Right lobe of liver (tissue), 6 donors: ENCODE measurements at regions of chr19 and their contacts with region 1.

Region 1: GRCh38 chr19:46288896-46289588 is 7.8 kb upstream of the HIF3A start:
- DNase-seq: no peak
- ATAC-seq: peak in 3 of 4 donors; percentile 50 to 83 (median 75)
- H3K4me3 ChIP-seq: no peak overlapping the region
- H3K27ac ChIP-seq: no peak overlapping the region
- H3K4me1 ChIP-seq: no peaks in the 10 kb centered on the region
- H3K27me3 ChIP-seq: no peaks in the 10 kb centered on the region
- CTCF ChIP-seq: no peak
- POLR2A ChIP-seq: no peak

Region 2: DNA sequence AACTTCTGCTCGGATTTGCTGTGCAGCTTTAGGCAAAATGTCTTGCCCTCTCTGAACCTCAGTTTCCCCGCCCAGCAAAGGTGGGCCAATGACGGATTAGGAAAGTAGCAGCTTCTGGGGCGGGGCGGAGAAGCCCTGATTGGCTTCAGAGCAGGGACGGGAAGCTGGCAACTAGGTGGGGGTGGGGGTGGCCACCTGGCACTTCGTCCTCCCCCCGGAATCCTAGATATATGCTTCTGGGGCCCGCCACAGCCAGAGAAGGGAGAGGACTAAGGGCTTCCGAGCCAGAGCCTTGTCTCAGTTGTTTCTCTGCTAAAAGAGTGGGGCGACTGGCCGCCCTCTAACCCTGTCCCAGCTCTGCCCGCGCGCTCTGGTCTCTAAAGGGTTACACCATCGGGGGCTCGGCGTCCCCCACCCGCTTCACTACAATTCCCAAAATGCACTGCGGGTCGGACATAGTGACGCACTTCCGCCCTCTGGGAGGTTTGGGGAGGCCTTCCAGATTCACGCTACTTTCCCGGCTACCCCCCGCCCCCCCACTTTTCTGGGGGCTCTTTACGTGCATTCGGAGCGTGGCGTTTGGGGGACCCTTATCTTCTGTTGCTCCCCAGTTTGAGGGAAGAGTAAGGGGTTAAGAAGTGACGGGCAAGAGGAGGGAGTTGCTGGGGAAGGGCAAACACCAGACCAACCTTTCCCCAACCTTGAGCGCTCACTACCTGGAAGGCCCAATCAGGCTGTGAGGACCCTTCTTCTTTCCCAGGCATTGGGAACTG is 402.4 kb before region 1 on chr19:
- intact Hi-C with region 1: no loop called
- DNase-seq: peak; percentile 88 to 94 (median 92)
- ATAC-seq: peak; percentile 58 to 64 (median 62)
- H3K4me3 ChIP-seq: peak overlapping the region; percentile 69 to 83 (median 80)
- H3K27ac ChIP-seq: peak overlapping the region; percentile 78 to 86 (median 84)
- H3K4me1 ChIP-seq: peaks cover 0 to 28% (median 11%) of the 10 kb centered on the region in 4 donors
- H3K27me3 ChIP-seq: no peaks in the 10 kb centered on the region
- CTCF ChIP-seq: no peak
- POLR2A ChIP-seq: peak; percentile 82

Region 3: DNA sequence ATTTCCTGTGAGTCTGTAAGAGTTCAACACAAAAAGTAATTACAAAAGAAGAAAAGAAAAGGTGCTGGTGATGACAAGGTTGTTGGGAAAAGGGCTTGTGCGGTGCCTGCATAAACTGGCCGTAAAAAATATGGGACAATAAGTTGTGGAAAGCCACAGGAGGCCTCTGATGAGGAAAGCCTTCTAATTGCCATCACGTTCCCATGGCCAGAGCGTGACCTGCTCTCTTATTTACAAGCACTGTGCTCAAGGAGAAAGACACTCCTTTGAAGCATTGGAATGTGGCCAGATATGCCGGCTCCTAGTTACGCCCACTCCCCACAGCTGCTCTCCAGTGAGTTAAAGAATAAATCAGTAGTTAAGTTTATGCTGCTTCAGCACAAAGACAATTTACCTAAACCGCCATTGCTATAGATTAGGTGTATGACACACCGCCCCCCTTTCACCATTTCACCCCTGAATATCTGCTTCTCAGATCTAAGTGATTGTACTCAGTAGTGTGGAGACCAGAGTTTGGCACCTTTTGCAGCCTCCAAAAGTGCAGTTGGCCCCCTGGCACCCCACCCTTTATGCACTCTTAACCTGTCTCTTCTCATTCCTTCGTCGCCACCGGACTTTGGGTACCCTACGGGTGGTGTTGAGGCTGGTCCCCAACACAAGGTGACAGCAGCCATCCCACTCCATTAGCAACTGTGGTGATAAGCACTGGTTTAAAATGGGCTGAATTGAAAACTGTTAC is 258.1 kb before region 1 on chr19:
- intact Hi-C with region 1: no loop called
- DNase-seq: no peak
- ATAC-seq: no peak
- H3K4me3 ChIP-seq: no peak overlapping the region
- H3K27ac ChIP-seq: no peak overlapping the region
- H3K4me1 ChIP-seq: no peaks in the 10 kb centered on the region
- H3K27me3 ChIP-seq: no peaks in the 10 kb centered on the region
- CTCF ChIP-seq: no peak
- POLR2A ChIP-seq: no peak

Region 4: DNA sequence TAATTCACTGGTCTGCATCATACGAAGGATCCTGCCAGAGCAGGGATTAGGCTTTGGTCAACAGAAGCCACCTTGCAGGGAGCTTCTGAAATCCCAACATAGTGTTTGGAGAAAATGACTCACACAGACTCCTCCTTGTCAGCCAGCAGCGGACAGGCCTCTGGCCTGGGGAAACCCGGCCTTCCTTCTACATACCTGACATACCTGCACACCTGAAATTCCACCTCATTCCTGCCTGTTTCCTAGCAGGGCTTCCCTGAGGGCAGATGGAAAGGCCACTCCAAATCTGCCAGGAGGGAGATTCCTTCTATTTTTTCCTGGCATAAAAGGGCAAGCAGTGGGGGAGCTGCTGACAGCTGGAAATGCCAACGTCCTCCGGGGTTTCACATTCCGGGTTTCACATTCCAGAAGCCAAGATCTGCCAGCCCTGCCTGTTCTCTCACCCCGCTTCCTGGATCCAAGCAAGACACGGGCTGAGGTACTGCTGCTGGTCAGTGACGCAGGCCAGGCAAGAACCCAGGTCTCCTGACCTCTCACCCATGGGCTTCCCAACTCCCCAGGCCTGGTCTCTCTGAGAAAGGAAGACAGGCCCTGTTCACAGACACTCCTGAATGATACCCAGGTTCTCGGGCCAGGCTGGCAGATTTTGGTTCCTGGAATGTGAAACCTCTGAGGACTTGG is 77.7 kb before region 1 on chr19:
- intact Hi-C with region 1: no loop called
- DNase-seq: no peak
- ATAC-seq: peak in 1 of 4 donors; percentile 18
- H3K4me3 ChIP-seq: no peak overlapping the region
- H3K27ac ChIP-seq: peak overlapping the region in 1 of 3 donors; percentile 3
- H3K4me1 ChIP-seq: no peaks in the 10 kb centered on the region
- H3K27me3 ChIP-seq: no peaks in the 10 kb centered on the region
- CTCF ChIP-seq: no peak
- POLR2A ChIP-seq: no peak

Region 5: DNA sequence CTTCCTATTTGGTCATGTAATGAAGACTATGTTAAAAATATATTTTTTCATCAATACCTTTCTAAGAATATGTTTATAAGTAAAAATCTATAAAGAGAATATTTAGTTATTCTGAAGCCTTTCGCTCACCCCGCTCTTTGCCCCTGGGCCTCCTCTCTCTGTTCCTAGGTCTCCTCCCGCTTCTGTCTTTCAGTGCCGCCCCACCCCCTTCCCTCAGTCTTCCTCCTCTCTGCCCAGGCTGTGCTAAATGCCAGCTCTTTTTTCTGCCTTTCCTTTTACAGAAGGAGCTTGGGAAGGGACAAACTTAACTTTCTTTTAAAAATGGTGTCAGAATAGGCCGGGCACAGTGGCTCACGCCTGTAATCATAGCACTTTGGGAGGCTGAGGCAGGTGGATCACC is 30.6 kb after region 1 on chr19:
- intact Hi-C with region 1: no loop called
- DNase-seq: no peak
- ATAC-seq: no peak
- H3K4me3 ChIP-seq: no peak overlapping the region
- H3K27ac ChIP-seq: no peak overlapping the region
- H3K4me1 ChIP-seq: peaks cover 0 to 7% (median 0%) of the 10 kb centered on the region in 4 donors
- H3K27me3 ChIP-seq: no peaks in the 10 kb centered on the region
- CTCF ChIP-seq: no peak
- POLR2A ChIP-seq: no peak

Region 6: GRCh38 chr19:46346821-46347571 is 58.0 kb after region 1 on chr19 and contains the start of gene PPP5C:
- intact Hi-C with region 1: loop called in 1 of 2 experiments (anchors 10 kb)
- DNase-seq: peak; percentile 92 to 93 (median 92)
- ATAC-seq: peak; percentile 85 to 90 (median 86)
- H3K4me3 ChIP-seq: peak within 1 kb of the TSS; percentile 89 to 100 (median 93)
- H3K27ac ChIP-seq: peak within 1 kb of the TSS; percentile 79 to 88 (median 83)
- H3K4me1 ChIP-seq: peaks cover 0 to 32% (median 12%) of the 10 kb centered on the region in 4 donors
- H3K27me3 ChIP-seq: no peaks in the 10 kb centered on the region
- CTCF ChIP-seq: peak; percentile 65 to 79 (median 66)
- POLR2A ChIP-seq: peak; percentile 70
- total RNA-seq, gene PPP5C: 23.9 to 47.8 (median 36.0) TPM

Region 7: DNA sequence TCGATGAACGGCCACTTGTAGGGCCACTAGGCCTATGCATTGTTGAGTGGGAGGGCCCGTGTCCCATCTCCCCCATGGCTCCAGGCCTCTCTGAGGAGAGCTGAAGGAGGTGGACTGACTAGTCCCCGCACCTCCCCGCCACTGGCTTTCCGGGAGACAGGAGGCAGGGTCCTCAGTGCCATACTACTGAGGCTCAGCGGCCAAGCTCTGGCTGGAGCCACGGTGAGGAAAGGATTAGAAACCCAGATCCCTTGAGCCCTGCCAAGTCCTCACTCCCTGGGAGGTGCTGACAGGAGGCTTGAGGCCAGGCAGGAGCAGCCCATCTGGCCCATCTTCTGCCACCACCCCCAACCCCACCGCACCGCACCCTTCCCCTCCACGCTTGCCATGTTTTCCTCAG is 95.4 kb after region 1 on chr19:
- intact Hi-C with region 1: loop called in 1 of 2 experiments (anchors 10 kb)
- DNase-seq: peak; percentile 10 to 35 (median 26)
- ATAC-seq: no peak
- H3K4me3 ChIP-seq: no peak overlapping the region
- H3K27ac ChIP-seq: no peak overlapping the region
- H3K4me1 ChIP-seq: no peaks in the 10 kb centered on the region
- H3K27me3 ChIP-seq: no peaks in the 10 kb centered on the region
- CTCF ChIP-seq: no peak
- POLR2A ChIP-seq: no peak

Region 8: DNA sequence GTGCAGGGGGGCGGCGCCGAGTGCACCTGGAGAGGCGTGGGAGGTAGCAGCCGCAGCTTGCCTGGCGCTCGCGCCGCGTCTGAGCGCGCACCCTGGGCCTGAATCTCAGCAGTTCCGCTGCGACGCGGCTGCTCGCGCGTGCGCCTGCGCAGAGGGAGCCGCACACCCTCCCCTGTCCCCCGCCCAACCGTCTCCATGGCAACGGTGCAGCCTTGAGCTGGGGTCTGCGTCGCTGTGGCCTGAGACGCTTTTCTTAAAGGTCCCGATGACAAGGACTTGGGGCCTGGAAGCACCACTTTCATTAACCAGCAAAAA is 206.7 kb after region 1 on chr19 and contains the start of gene PNMA8B:
- intact Hi-C with region 1: loop called in 1 of 2 experiments (anchors 10 kb)
- DNase-seq: peak in 2 of 3 donors; percentile 30 to 47
- ATAC-seq: peak in 1 of 4 donors; percentile 12
- H3K4me3 ChIP-seq: peak within 1 kb of the TSS in 1 of 3 donors; percentile 24
- H3K27ac ChIP-seq: no peak within 1 kb of the TSS
- H3K4me1 ChIP-seq: peaks cover 0 to 3% (median 0%) of the 10 kb centered on the region in 4 donors
- H3K27me3 ChIP-seq: no peaks in the 10 kb centered on the region
- CTCF ChIP-seq: no peak
- POLR2A ChIP-seq: no peak
- total RNA-seq, gene PNMA8B: 0.20 to 0.55 (median 0.33) TPM